Gastrocnemius medialis (tissue), 4 donors: ENCODE measurements at regions of chr5 and their contacts with region 1.

Region 1: GRCh38 chr5:132410451-132411381 is 41.2 kb downstream of the SLC22A5 start:
- DNase-seq: peak; percentile 69 to 90
- ATAC-seq: peak; percentile 70 to 75
- H3K4me3 ChIP-seq: peak overlapping the region; percentile 65 to 80 (median 68)
- H3K27ac ChIP-seq: peak overlapping the region; percentile 87 to 99 (median 94)
- H3K4me1 ChIP-seq: peaks cover 48 to 61% of the 10 kb centered on the region in 2 donors
- H3K27me3 ChIP-seq: no peaks in the 10 kb centered on the region
- CTCF ChIP-seq: peak; percentile 42 to 71 (median 60)
- POLR2A ChIP-seq: peak; percentile 72 to 74

Region 2: GRCh38 chr5:132378580-132378979 is 32.1 kb before region 1 on chr5:
- in situ Hi-C with region 1: no loop called
- intact Hi-C with region 1: loop called (anchors 5 kb)
- DNase-seq: peak; percentile 83
- ATAC-seq: peak; percentile 87 to 95
- H3K4me3 ChIP-seq: no peak overlapping the region
- H3K27ac ChIP-seq: peak overlapping the region; percentile 77 to 99 (median 90)
- H3K4me1 ChIP-seq: peaks cover 50 to 57% of the 10 kb centered on the region in 2 donors
- H3K27me3 ChIP-seq: no peaks in the 10 kb centered on the region
- CTCF ChIP-seq: no peak
- POLR2A ChIP-seq: peak; percentile 29 to 56

Region 3: DNA sequence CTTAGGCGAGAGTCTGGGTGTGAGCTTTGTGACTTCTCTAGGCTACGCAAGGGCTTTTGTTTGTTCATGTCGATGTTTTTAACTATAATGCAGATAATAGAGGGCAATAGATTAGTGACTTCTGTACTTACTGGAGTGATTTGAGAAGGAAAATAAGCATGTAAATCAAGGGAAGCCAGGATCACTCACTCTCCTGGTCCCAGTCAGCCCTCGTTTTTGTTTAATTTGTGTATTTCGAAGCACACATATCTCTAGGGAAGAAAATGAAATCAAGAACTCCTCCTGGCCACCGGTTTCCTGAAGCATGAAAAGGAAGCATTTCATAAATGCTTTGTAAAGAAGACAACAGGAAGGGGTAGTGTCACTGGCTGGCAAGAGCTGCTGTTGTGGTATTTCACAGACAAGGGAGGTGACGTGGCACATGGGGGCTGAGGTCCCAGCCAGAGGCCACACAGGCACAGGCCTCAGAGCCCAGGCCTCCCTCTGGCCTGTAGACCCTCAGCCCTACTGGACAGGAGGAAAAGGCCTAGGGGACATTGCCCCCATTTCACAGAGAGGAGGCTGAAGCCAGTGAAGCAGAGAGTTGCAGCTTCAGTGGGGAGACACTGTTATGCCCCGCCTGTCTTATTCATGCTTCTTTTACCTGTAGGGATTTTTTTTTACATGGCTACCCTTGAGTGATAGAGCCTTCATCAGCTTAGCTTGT is 45.7 kb after region 1 on chr5:
- in situ Hi-C with region 1: no loop called
- intact Hi-C with region 1: no loop called
- DNase-seq: peak; percentile 41 to 60
- ATAC-seq: peak in 1 of 2 donors; percentile 2
- H3K4me3 ChIP-seq: no peak overlapping the region
- H3K27ac ChIP-seq: peak overlapping the region; percentile 74 to 95 (median 82)
- H3K4me1 ChIP-seq: peaks cover 42 to 53% of the 10 kb centered on the region in 2 donors
- H3K27me3 ChIP-seq: no peaks in the 10 kb centered on the region
- CTCF ChIP-seq: no peak
- POLR2A ChIP-seq: no peak